ENCODE measurements at regions of chr20 and their contacts with region 1.

Region 1: DNA sequence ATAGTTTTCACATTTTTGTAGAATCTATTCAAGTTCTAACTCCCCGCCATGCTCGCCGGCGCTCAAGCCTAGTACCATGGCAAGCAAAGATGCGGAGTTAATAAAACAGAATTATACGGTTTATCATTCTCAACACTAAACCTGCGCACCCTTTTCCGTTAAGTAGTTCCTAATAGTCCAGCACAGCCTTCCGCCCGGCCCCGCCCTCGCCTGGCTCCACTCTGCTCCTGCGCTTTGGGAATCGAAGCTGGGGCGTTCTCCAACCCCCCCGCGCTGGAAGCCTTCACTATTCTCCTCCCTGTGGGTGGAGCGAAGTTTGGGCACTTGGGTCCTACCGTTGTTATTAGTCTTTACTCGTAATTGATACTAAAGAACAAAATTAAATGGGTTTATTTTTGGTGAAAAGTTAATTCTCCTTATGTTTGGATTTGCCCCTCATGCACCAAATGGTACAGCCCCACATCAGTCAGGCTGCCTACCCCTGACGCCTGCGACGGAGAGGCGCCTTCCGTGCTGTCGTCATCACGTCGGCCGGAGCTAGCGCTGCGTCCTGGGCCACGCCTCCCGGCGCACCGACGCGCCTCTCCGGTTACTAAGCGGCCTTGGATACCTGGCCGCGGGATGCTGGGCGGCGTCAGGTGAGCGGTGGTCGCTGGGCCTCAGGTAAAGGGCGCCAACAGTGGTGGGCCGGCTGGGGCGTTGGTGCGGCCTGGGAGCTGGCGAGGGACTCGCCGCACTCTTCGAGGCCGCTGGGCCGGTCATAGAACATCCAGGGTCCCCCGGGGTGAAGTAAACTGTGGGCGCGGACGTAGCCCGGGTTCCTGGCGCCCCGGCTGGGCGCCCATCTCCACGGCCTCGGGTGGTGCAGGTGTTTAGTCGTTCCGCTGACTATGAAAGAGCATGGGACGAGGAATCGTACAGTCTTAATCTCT is at the start of gene IFT52:
- DNase-seq: peak; percentile 97
- total RNA-seq, gene IFT52: 10.2 TPM

Region 2: DNA sequence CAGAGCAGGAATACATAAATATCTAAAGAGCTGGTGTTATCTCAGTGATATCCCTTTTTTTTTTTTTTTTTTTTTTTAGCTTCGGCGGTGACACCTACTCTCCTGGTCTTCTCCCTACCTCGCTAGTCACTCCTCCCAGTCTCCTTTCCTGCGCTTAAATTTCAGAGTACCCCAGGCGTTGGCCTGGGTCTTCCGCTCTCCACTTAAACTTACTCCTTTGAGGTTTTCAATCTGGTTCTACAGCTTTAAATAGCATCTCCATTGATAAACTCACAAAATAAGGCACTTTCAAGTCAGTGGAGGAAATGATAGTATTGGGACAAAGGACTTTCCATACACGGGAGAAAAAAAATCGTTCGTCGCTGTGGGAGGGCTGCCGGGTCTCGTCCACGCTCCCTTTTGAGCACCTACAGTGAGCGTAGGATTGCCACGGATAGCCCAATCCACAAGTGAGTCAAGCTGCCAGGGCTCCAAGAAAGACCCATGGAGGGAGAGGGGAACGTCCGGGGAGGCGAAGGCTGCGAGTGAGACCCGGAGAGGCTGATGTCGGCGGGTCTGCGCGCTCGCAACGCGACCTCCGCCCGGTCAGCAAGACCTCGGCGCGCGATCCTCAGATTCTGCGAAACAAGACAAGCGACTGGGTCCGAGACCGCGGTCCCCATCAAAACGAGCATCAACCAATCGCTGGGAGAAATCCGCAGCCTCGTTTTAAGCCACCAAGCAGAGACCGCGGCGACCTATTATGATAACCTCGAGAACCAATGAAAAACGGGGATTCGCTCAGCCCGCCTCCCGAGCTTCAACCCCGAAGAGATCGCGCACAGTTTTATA is 133.6 kb before region 1 on chr20:
- intact Hi-C with region 1: loop called (anchors 10 kb)
- DNase-seq: peak; percentile 94

Measured in cardiac septum (tissue), 1 donor.